Uterus (tissue), 4 donors: ENCODE measurements at regions of chr19 and their contacts with region 1.

Region 1: DNA sequence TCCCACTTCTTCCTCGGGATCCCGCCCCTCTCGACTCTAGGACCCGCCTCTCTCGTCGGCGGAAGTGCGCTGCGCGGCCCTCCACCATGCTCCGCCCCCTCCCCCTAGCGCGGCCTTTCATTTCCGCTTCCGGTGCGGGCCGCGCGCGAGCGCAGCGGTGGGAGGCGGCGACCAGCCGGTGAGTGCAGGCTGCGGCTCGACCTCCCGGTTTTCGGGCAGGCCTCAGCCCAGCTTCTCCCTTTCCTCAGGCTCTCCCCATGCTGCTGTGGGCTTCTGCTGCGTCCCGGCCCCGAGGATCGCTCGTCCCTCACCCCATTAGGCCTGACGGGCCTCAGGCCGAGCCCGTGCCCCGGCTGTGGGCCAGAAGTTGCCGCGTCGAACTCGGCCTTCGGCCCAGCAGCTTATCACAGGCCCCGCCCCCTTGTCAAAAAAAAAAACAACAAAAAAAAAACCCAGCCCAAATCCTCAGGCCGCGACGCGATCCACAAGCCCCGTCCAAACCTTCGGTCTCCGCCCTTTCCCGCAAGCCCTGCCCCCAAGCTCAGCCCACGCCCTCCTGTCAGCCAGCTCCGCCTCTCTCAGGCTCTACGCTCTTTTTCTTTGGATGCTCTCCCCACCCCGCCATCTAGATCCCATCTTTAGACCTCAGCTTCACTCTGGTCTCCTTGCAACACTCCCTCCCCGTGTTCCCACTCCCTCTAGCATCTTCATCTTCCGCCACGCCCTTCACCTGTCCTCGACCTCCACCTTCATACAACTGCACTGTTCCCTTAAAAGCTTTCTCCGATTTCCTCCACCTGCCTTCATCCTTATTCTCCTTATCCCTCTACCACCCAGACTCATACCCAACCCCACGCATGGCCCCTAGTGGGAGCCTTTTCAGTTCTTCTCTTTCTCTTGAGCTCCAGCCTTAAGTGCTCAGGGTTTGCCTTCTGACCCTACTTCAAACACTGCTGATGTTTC is at the start of gene CLASRP:
- DNase-seq: peak; percentile 90 to 91
- H3K4me3 ChIP-seq: peak within 1 kb of the TSS; percentile 77 to 98
- H3K27ac ChIP-seq: peak within 1 kb of the TSS; percentile 87 to 89
- H3K4me1 ChIP-seq: peaks cover 6 to 19% of the 10 kb centered on the region in 2 donors
- H3K27me3 ChIP-seq: no peaks in the 10 kb centered on the region
- CTCF ChIP-seq: peak in 2 of 4 experiments; percentile 14 to 23
- POLR2A ChIP-seq: peak; percentile 81 to 95
- total RNA-seq, gene CLASRP: 36.6 to 107 (median 73.9) TPM

Region 2: GRCh38 chr19:44974857-44975256 is 64.4 kb before region 1 on chr19:
- intact Hi-C with region 1: no loop called
- DNase-seq: no peak
- H3K4me3 ChIP-seq: no peak overlapping the region
- H3K27ac ChIP-seq: no peak overlapping the region
- H3K4me1 ChIP-seq: no peaks in the 10 kb centered on the region
- H3K27me3 ChIP-seq: no peaks in the 10 kb centered on the region
- CTCF ChIP-seq: no peak
- POLR2A ChIP-seq: no peak

Region 3: DNA sequence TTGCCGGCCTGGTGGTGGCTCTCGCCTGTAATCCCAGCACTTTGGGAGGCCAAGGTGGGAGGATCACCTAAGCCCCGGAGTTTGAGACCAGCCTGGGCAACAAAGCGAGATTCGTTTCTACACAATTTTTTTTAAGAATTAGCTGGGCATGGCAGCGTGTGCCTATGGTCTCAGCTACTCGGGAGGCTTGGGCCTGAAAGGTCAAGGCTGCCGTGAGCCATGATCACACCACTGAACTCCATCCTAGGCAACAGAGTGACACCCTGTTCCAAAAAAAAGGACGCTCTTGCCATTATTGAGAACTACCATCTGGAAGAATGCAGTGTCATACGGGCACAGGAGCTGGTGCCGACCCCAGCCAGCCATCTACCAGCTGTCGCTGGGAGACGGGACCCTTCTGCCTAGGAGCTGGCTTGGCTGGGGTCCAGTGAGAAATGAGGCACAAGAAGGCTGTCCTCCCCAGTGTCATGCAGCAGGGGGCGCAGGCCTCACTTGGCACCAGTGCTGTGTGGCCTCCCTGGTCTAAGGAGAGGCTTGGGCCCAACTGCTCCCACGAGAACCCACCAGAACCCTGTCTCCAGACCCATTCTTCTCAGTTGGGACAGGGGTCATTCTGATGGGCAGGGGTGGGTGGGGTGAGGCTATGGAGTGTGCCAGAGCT is 50.2 kb before region 1 on chr19:
- intact Hi-C with region 1: no loop called
- DNase-seq: peak; percentile 58 to 61
- H3K4me3 ChIP-seq: no peak overlapping the region
- H3K27ac ChIP-seq: no peak overlapping the region
- H3K4me1 ChIP-seq: no peaks in the 10 kb centered on the region
- H3K27me3 ChIP-seq: no peaks in the 10 kb centered on the region
- CTCF ChIP-seq: peak in 3 of 4 experiments; percentile 24 to 35 (median 30)
- POLR2A ChIP-seq: no peak

Region 4: DNA sequence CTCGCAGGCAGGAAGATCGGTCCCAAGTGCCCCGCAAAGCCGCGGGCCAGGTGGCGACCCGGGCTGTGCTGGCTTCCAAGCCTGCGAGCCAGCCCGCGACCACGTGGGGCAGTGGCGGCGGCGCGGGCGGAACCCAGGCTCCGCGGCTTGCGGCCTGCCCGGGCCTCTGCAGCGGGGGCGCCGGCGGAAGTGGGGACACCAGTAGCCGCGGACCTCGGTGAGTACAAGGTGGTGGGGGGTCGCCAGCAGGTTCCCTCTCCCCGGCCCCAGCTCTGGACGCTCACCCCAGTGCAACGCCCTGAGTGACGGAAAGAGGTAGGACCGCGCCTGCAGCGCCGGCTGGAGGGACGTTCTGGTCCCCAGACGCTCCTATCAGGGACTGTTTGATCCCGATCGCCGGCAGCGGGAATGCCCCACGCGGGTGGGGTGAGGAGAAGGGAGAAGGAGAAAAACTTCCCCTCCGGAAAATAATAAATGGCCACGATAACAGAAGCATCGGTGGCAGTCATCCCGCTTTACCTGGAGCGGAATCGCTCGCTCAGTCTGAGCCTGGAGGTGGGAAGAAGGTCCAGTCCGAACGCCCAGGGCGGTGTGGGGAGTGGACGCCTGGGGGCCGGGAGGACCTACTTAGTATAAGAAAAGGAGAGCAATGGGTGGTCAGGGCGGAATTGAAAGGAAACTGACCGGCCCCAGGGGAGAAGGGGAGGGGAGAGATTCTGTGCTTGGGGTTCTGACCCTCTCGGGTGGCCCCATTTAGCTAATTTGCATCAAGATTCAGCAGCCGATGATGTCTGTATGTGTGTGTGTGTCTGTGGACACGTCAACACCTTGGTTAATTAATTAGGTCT is 40.1 kb after region 1 on chr19 and contains the start of gene GEMIN7:
- intact Hi-C with region 1: loop called (anchors 2 kb)
- DNase-seq: peak; percentile 59 to 67
- H3K4me3 ChIP-seq: peak within 1 kb of the TSS; percentile 78 to 96
- H3K27ac ChIP-seq: peak within 1 kb of the TSS; percentile 57 to 75
- H3K4me1 ChIP-seq: peaks cover 0 to 4% of the 10 kb centered on the region in 2 donors
- H3K27me3 ChIP-seq: no peaks in the 10 kb centered on the region
- CTCF ChIP-seq: peak in 2 of 4 experiments; percentile 16 to 18
- POLR2A ChIP-seq: peak in 1 of 2 donors; percentile 42
- total RNA-seq, gene GEMIN7: 3.5 to 18.4 (median 13.7) TPM